ENCODE measurements at regions of chr2 and their contacts with region 1.

Region 1: DNA sequence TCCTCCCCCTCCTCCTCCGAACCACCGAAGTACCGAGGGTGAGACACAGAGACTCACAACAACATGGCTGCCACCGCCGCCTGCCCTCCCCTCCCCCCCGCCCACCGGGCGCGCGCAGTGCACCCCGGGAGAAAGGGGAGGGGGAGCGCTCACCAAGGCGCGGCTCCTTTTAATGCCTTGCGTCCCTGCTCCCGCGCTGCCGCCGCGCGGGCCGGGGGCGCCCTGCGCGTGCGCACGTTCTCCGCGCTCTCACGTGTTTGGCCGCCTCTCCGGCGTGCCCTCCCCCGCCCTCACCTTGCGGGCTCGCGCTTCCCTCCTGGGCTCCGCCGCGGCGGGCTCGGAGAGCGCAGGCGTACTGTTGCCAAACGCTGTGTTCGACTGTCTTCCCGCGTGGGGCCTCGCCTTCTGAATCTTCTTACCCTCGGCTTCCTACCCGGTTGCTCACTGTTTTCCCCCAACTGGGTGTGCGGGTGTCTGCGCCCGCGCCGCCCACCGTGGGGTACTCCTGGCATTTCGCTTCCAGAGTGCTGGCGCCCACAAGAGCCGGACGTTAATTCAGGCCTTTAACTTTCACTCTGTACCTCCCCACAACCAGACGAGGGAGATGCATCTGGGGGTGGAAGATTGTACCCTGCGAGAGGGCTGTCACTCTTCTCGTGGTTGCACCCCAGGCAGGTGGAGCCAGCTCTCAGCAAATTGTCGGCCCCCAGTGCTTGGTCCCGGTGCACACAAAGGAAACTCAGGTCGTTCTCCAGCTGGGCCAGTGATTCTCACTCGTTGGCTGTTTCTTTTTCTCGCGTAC is at the start of gene PUM2:
- DNase-seq: peak; percentile 87 to 99 (median 94)
- ATAC-seq: peak; percentile 79
- H3K4me3 ChIP-seq: peak within 1 kb of the TSS; percentile 77
- H3K4me3 Mint-ChIP-seq: peak within 1 kb of the TSS; percentile 88
- H3K27ac ChIP-seq: peak within 1 kb of the TSS; percentile 83 to 94
- H3K27ac Mint-ChIP-seq: no peak within 1 kb of the TSS
- H3K4me1 ChIP-seq: peaks cover 41% of the 10 kb centered on the region
- H3K4me1 Mint-ChIP-seq: peaks cover 39% of the 10 kb centered on the region
- H3K27me3 ChIP-seq: no peaks in the 10 kb centered on the region
- H3K27me3 Mint-ChIP-seq: no peaks in the 10 kb centered on the region
- CTCF ChIP-seq: peak; percentile 32
- total RNA-seq, gene PUM2: 94.9 to 95.4 TPM

Region 2: DNA sequence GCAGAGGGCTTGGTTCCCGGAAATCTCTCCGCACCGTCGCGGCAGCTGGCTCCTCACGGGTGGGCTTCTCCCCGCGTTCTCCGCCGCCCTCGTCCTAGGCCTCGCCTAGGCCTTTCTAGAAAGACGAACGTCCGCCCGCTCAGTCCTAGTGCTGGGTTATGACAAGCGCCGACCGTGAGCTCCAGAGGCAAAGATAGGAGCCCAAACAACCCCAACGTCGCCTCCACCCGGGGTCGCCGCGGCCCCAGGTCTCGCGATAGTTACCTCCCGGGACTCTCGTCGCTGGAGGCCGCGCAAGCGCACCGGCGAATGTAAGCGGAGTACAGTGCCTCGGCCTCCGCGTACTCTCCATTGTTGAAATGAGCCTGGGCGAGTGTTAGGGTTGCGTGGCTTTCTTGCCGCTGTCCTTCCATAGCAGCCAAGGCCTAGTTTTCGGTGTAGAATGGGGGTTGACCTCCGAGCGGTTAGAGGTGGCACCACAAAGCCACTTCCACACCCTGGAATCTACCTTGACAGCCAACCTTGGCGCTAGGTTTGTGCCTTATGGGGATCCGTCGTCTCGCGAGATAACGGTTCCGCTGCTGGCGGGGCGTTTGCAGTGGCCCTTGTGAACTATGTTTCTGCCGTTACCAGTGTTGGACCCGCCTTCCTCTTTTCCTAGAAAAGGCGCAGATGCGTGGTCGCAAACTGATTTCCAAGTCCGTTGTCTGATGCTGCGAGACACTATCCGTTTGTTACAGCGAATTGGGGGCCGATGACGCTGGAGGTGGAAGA is 449.3 kb before region 1 on chr2 and contains the start of gene TTC32:
- CTCF ChIA-PET with region 1: no interaction called
- POLR2A ChIA-PET with region 1: interaction called, 3 read pairs
- intact Hi-C with region 1: loop called in 1 of 2 experiments (anchors 2 kb)
- DNase-seq: peak; percentile 90 to 96 (median 92)
- ATAC-seq: peak; percentile 85
- H3K4me3 ChIP-seq: peak within 1 kb of the TSS; percentile 72
- H3K4me3 Mint-ChIP-seq: peak within 1 kb of the TSS; percentile 93
- H3K27ac ChIP-seq: peak within 1 kb of the TSS; percentile 94 to 97
- H3K27ac Mint-ChIP-seq: peak within 1 kb of the TSS; percentile 91
- H3K4me1 ChIP-seq: peaks cover 14% of the 10 kb centered on the region
- H3K4me1 Mint-ChIP-seq: peaks cover 40% of the 10 kb centered on the region
- H3K27me3 ChIP-seq: peaks cover 0 to 5% of the 10 kb centered on the region in 2 experiments
- H3K27me3 Mint-ChIP-seq: peaks cover 8% of the 10 kb centered on the region
- CTCF ChIP-seq: no peak
- total RNA-seq, gene TTC32: 53.1 to 54.2 TPM

Region 3: GRCh38 chr2:20051532-20052228 is 299.3 kb before region 1 on chr2 and contains the start of gene LAPTM4A:
- CTCF ChIA-PET with region 1: no interaction called
- POLR2A ChIA-PET with region 1: no interaction called
- intact Hi-C with region 1: loop called in 1 of 2 experiments (anchors 5 kb)
- DNase-seq: peak; percentile 93 to 100 (median 96)
- ATAC-seq: peak; percentile 90
- H3K4me3 ChIP-seq: peak within 1 kb of the TSS; percentile 87
- H3K4me3 Mint-ChIP-seq: no peak within 1 kb of the TSS
- H3K27ac ChIP-seq: peak within 1 kb of the TSS; percentile 94 to 99
- H3K27ac Mint-ChIP-seq: no peak within 1 kb of the TSS
- H3K4me1 ChIP-seq: peaks cover 28% of the 10 kb centered on the region
- H3K4me1 Mint-ChIP-seq: peaks cover 29% of the 10 kb centered on the region
- H3K27me3 ChIP-seq: peaks cover 6 to 9% of the 10 kb centered on the region in 2 experiments
- H3K27me3 Mint-ChIP-seq: peaks cover 25% of the 10 kb centered on the region
- CTCF ChIP-seq: no peak
- total RNA-seq, gene LAPTM4A: 59.4 to 62.0 TPM

Region 4: GRCh38 chr2:20333738-20334137 is 17.2 kb before region 1 on chr2:
- CTCF ChIA-PET with region 1: interaction called, 3 read pairs
- POLR2A ChIA-PET with region 1: interaction called, 5 read pairs
- intact Hi-C with region 1: loop called in 1 of 2 experiments (anchors 2 kb)
- DNase-seq: no peak
- ATAC-seq: peak; percentile 29
- H3K4me3 ChIP-seq: no peak overlapping the region
- H3K4me3 Mint-ChIP-seq: peak overlapping the region; percentile 74
- H3K27ac ChIP-seq: no peak overlapping the region
- H3K27ac Mint-ChIP-seq: peak overlapping the region; percentile 85
- H3K4me1 ChIP-seq: peaks cover 26% of the 10 kb centered on the region
- H3K4me1 Mint-ChIP-seq: peaks cover 91% of the 10 kb centered on the region
- H3K27me3 ChIP-seq: no peaks in the 10 kb centered on the region
- H3K27me3 Mint-ChIP-seq: no peaks in the 10 kb centered on the region
- CTCF ChIP-seq: no peak

Region 5: DNA sequence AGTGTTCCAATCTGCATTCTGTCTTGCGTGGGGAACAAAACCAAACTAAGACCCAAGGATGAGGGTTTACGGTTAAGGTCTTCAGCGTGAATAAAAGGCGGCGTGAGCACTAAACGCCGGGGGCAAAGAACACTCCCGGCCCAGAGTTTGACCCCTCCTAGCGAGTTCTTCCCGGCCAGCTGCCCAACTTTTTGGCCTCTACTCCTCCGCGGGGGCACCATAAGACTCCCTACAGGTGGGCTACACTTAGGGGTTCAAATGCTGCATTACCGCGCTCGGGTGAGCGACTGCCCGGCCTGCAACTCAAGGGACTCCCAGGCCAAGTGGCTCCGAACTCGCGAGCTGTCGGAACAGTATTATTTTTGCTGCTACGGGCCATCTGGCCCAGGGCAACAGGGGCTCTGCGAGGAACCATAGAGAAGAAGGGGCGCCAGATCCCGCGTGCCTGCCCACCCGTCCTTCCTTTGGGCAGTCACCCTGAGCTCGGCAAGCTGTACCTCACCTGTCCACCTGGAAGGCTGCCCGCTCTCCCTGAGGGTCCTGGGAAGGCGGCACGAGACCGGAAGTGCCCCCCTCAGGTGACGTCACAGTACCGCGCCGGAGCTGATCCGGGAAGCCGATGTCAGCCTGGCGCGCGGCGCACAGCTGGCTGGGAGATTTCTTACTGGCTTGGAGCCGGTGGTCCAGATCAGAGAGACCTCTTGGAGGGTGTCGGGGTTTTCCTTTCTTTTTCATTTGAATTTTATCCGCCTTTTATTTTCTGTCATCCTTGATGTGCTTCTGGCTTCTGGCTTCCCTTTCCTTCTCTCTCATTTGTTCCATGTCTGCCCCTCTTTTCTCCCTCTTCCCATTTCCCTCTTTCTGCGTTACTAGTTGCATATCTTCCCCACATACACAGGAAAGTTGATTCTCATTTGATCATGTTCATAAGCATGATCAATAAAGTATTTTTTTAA is 471.9 kb after region 1 on chr2 and contains the start of gene LDAH:
- CTCF ChIA-PET with region 1: no interaction called
- POLR2A ChIA-PET with region 1: interaction called, 3 read pairs
- intact Hi-C with region 1: loop called in 1 of 2 experiments (anchors 10 kb)
- DNase-seq: peak; percentile 69 to 90 (median 75)
- ATAC-seq: peak; percentile 82
- H3K4me3 ChIP-seq: peak within 1 kb of the TSS; percentile 94
- H3K4me3 Mint-ChIP-seq: peak within 1 kb of the TSS; percentile 94
- H3K27ac ChIP-seq: peak within 1 kb of the TSS; percentile 86 to 98
- H3K27ac Mint-ChIP-seq: peak within 1 kb of the TSS; percentile 99
- H3K4me1 ChIP-seq: peaks cover 9% of the 10 kb centered on the region
- H3K4me1 Mint-ChIP-seq: peaks cover 42% of the 10 kb centered on the region
- H3K27me3 ChIP-seq: no peaks in the 10 kb centered on the region
- H3K27me3 Mint-ChIP-seq: no peaks in the 10 kb centered on the region
- CTCF ChIP-seq: no peak
- total RNA-seq, gene LDAH: 6.5 to 7.2 TPM